ENCODE measurements at regions of chr9 and their contacts with region 1.

Region 1: DNA sequence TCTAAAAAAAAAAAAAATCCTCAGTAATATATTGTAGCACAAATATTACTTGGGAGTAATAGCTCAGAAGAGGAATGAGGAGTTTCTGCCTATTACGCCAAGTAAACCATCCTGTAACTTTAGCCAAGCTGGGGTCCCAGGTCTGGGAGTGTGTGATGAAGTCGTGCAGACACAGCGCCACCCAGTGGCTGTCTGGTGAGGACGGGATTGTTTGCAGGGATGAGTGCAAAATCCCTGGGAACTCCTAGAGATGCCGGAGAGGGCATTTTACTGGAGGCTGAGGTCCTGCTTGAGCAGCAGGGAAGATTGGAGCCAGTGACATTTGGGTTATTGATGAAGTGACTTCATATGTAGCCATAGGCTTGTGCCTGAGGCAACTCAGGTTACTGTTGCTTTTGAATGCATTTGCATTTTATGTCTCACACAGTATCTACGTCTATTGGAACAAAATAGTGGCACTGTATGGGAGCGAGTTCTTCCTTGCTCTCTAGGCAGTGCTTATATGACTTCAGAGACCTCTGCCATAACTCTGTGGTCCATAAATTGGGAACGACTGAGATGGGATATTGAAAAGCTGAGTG is 72.8 kb downstream of the PSAT1 start:
- DNase-seq: peak; percentile 65 to 84
- ATAC-seq: peak; percentile 61
- H3K4me3 ChIP-seq: no peak overlapping the region
- H3K27ac ChIP-seq: no peak overlapping the region
- H3K4me1 ChIP-seq: no peaks in the 10 kb centered on the region
- H3K27me3 ChIP-seq: no peaks in the 10 kb centered on the region

Region 2: GRCh38 chr9:78261403-78262001 is 108.2 kb before region 1 on chr9:
- intact Hi-C with region 1: loop called (anchors 5 kb)
- DNase-seq: no peak
- ATAC-seq: no peak
- H3K4me3 ChIP-seq: no peak overlapping the region
- H3K27ac ChIP-seq: no peak overlapping the region
- H3K4me1 ChIP-seq: no peaks in the 10 kb centered on the region
- H3K27me3 ChIP-seq: no peaks in the 10 kb centered on the region

Region 3: GRCh38 chr9:78273761-78274160 is 96.0 kb before region 1 on chr9:
- intact Hi-C with region 1: loop called in 1 of 2 experiments (anchors 5 kb)
- DNase-seq: no peak
- ATAC-seq: no peak
- H3K4me3 ChIP-seq: no peak overlapping the region
- H3K27ac ChIP-seq: no peak overlapping the region
- H3K4me1 ChIP-seq: no peaks in the 10 kb centered on the region
- H3K27me3 ChIP-seq: no peaks in the 10 kb centered on the region